SK-N-SH (cell line): ENCODE measurements at regions of chr7 and their contacts with region 1.

Region 1: GRCh38 chr7:6589829-6590644 is at the start of gene INTS15:
- DNase-seq: peak; percentile 99
- H3K4me3 ChIP-seq: peak within 1 kb of the TSS; percentile 63 to 99
- H3K27ac ChIP-seq: peak within 1 kb of the TSS; percentile 62 to 75; a peak in 3 of 4 replicates
- H3K4me1 ChIP-seq: peaks cover 2 to 7% of the 10 kb centered on the region in 2 experiments; a peak in 1 of 4 replicates
- H3K27me3 ChIP-seq: no peaks in the 10 kb centered on the region
- CTCF ChIP-seq: peak; percentile 62
- EP300 ChIP-seq: peak in 1 of 2 experiments; percentile 26; a peak in 1 of 4 replicates
- RAD21 ChIP-seq: peak; percentile 49
- polyA plus RNA-seq, gene INTS15: 31.3 and 39.1 TPM in 2 replicates

Region 2: GRCh38 chr7:6382817-6383216 is 207.2 kb before region 1 on chr7:
- CTCF ChIA-PET with region 1: no interaction called
- POLR2A ChIA-PET with region 1: no interaction called
- DNase-seq: no peak
- H3K4me3 ChIP-seq: no peak overlapping the region
- H3K27ac ChIP-seq: peak overlapping the region in 1 of 2 experiments; percentile 84; a peak in 1 of 4 replicates
- H3K4me1 ChIP-seq: peaks cover 3 to 29% of the 10 kb centered on the region in 2 experiments
- H3K27me3 ChIP-seq: no peaks in the 10 kb centered on the region
- CTCF ChIP-seq: no peak
- EP300 ChIP-seq: no peak
- RAD21 ChIP-seq: no peak

Region 3: DNA sequence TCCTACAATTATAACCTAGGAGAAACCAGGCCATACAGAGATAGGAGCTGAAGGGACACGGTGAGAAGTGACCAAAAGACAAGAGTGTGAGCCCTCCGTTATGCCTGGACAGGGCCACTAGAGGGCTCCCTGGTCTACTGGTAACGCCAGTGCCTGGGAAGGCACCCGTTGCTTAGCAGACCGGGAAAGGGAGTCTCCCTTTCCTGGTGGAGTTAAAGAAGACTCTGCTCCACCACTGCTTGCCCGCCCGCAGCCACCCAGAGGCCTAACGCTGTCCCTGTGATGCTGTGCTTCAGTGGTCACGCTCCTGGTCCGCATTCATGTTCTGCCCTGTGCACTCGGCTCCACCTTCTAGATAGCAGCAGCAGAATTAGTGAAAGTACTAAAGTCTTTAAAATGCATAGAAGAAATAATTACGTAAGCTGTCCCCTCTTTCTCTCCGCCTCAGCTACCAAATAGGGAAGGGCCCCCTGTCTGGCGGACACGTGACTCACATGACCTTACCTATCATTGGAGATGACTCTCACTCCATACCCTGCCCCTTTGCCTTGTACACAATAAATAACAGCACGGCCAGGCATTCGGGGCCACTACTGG is 73.6 kb before region 1 on chr7:
- CTCF ChIA-PET with region 1: interaction called, 19 read pairs
- POLR2A ChIA-PET with region 1: no interaction called
- DNase-seq: peak; percentile 85
- H3K4me3 ChIP-seq: peak overlapping the region in 1 of 2 experiments; percentile 42; a peak in 2 of 4 replicates
- H3K27ac ChIP-seq: no peak overlapping the region
- H3K4me1 ChIP-seq: peaks cover 0 to 3% of the 10 kb centered on the region in 2 experiments; a peak in 1 of 4 replicates
- H3K27me3 ChIP-seq: peaks cover 6% of the 10 kb centered on the region; the same call in 1 of the 2 replicates
- CTCF ChIP-seq: peak; percentile 89
- EP300 ChIP-seq: no peak
- RAD21 ChIP-seq: peak; percentile 87

Region 4: GRCh38 chr7:6558837-6559236 is 31.2 kb before region 1 on chr7:
- CTCF ChIA-PET with region 1: interaction called, 11 read pairs
- POLR2A ChIA-PET with region 1: no interaction called
- DNase-seq: peak; percentile 88
- H3K4me3 ChIP-seq: no peak overlapping the region
- H3K27ac ChIP-seq: no peak overlapping the region
- H3K4me1 ChIP-seq: no peaks in the 10 kb centered on the region
- H3K27me3 ChIP-seq: peaks cover 2% of the 10 kb centered on the region; the same call in 1 of the 2 replicates
- CTCF ChIP-seq: peak; percentile 65
- EP300 ChIP-seq: no peak
- RAD21 ChIP-seq: peak; percentile 89

Region 5: DNA sequence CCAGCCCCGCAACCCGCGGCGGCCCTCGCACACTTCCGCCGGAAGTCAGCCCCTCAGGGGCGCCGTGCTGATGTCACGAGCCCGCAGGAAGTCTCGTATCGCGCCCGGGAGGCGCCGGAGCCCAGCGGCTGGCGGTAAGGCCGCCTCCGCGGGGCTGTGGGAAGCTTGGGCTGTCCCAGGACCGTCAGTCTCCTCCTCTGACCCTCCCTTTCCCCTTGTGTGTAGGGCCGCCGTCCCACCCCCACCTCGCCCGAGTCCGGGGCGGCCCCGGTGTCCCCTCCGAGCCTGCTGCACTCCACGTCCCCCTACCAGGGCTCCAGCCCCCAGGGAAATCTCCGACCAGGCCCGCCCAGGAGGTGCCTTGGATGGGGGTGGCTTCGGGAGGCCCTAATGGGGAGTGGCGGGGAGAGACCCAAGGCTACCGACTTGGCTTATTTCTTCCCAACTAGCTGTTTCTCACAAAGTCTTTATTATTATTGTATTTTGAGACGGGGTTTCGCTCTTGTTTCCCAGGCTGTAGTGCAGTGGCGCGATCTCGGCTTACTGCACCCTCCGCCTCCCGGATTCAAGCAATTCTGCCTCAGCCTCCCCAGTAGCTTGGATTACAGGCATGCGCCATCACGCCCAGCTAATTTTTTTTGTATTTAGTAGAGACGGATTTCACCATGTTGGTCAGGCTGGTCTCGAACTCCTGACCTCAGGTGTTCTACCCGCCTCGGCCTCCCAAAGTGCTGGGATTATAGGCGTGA is 12.5 kb before region 1 on chr7 and contains the start of gene ZDHHC4:
- CTCF ChIA-PET with region 1: interaction called, 65 read pairs
- POLR2A ChIA-PET with region 1: interaction called, 16 read pairs
- DNase-seq: peak; percentile 99
- H3K4me3 ChIP-seq: peak within 1 kb of the TSS; percentile 62 to 87
- H3K27ac ChIP-seq: peak within 1 kb of the TSS; percentile 80 to 89
- H3K4me1 ChIP-seq: peaks cover 0 to 7% of the 10 kb centered on the region in 2 experiments; a peak in 1 of 4 replicates
- H3K27me3 ChIP-seq: no peaks in the 10 kb centered on the region
- CTCF ChIP-seq: no peak
- EP300 ChIP-seq: peak in 1 of 2 experiments; percentile 20; a peak in 1 of 4 replicates
- RAD21 ChIP-seq: no peak
- polyA plus RNA-seq, gene ZDHHC4: 169 and 178 TPM in 2 replicates

Region 6: GRCh38 chr7:6607651-6608051 is 17.6 kb after region 1 on chr7:
- CTCF ChIA-PET with region 1: interaction called, 15 read pairs
- POLR2A ChIA-PET with region 1: no interaction called
- DNase-seq: peak; percentile 43
- H3K4me3 ChIP-seq: no peak overlapping the region
- H3K27ac ChIP-seq: no peak overlapping the region
- H3K4me1 ChIP-seq: no peaks in the 10 kb centered on the region
- H3K27me3 ChIP-seq: no peaks in the 10 kb centered on the region
- CTCF ChIP-seq: no peak
- EP300 ChIP-seq: no peak
- RAD21 ChIP-seq: no peak

Region 7: DNA sequence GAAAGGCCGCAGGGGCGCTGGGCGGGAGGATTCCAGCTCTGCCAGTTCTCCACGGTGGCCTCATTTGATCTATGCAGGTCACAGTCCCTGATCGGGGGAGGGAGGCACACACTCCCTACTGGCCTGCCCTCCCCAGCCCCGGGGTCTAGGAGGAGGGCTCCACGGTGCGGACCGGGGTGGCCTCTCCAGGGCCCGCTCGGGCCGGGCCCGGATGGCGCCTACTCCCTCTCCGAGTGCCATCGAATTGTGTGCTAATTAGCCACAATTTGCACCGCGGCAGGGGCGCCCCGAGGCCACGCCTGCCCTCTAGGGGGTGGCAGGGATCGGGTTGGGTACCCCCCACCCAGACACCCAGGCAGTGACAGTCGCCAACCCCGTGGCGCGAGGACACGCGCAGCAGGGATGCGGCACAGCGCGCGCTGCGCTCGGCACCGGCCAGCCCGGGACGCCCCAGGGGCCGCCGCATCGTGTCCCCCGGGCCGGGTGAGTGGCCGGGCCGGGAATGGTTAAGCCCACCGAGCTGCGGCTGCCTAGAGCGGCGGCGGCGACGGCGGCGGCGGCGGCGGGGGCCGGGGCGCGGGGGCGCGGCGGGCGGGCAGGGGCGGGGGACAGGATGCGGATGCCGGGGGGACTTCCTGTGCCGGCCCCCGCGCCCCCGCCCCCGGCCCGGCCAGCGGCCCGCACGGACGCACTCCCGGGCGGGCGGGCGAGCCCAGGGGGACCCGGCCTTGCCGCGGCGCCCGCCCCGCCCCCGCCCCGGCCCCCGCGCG is 25.1 kb after region 1 on chr7 and contains the start of gene ZNF853:
- CTCF ChIA-PET with region 1: interaction called, 15 read pairs
- POLR2A ChIA-PET with region 1: interaction called, 5 read pairs
- DNase-seq: peak; percentile 93
- H3K4me3 ChIP-seq: peak within 1 kb of the TSS; percentile 59 to 73
- H3K27ac ChIP-seq: peak within 1 kb of the TSS in 1 of 2 experiments; percentile 25; a peak in 1 of 4 replicates
- H3K4me1 ChIP-seq: peaks cover 0 to 13% of the 10 kb centered on the region in 2 experiments; a peak in 2 of 4 replicates
- H3K27me3 ChIP-seq: no peaks in the 10 kb centered on the region
- CTCF ChIP-seq: peak; percentile 26
- EP300 ChIP-seq: no peak
- RAD21 ChIP-seq: no peak
- polyA plus RNA-seq, gene ZNF853: 15.9 and 17.6 TPM in 2 replicates

Region 8: DNA sequence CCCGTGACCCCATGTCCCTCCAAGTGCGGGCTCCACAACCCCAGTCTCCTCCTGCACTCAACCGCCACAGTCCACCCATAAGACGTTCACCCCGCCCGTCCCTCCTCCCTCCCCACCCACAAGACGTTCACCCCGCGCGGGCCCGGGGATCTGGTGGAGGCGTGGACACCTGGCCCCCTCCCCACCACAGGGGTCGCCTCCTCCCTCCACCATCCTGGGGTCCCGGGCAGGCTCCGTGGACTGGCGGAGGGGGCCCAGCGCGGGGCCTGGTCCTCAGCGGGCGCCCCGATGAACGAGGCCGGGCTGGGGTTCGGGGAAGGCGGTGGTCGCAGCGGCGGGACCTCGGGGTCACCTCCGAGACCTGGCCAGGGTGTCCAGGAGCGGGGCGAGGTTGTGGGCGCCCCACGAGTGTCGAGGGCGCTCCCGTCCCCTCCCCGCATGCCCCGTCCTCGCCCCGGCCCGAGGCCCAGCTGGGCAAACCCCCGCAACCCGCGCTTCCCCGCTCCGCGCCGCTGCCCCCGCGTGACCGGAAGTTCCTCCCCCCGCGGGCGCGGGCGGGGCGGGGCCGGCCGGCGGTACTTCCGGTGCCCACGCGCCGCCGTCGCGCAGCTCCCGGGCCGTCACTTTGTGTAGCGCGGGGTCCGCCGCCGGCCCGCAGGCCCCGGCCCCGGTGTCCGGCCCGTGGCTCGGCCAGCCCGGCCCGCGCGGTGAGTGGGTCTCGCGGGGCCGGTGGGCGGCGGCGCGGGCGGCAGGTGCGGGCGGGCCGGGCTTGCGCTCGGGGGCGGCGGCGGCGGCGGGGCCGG is 46.9 kb after region 1 on chr7 and contains the start of gene ZNF316:
- CTCF ChIA-PET with region 1: interaction called, 11 read pairs
- POLR2A ChIA-PET with region 1: interaction called, 4 read pairs
- DNase-seq: peak; percentile 99
- H3K4me3 ChIP-seq: peak within 1 kb of the TSS; percentile 68 to 93
- H3K27ac ChIP-seq: peak within 1 kb of the TSS in 1 of 2 experiments; percentile 67; a peak in 2 of 4 replicates
- H3K4me1 ChIP-seq: peaks cover 5 to 15% of the 10 kb centered on the region in 2 experiments; a peak in 2 of 4 replicates
- H3K27me3 ChIP-seq: no peaks in the 10 kb centered on the region
- CTCF ChIP-seq: no peak
- EP300 ChIP-seq: no peak
- RAD21 ChIP-seq: no peak
- polyA plus RNA-seq, gene ZNF316: 18.0 and 18.6 TPM in 2 replicates

Region 9: DNA sequence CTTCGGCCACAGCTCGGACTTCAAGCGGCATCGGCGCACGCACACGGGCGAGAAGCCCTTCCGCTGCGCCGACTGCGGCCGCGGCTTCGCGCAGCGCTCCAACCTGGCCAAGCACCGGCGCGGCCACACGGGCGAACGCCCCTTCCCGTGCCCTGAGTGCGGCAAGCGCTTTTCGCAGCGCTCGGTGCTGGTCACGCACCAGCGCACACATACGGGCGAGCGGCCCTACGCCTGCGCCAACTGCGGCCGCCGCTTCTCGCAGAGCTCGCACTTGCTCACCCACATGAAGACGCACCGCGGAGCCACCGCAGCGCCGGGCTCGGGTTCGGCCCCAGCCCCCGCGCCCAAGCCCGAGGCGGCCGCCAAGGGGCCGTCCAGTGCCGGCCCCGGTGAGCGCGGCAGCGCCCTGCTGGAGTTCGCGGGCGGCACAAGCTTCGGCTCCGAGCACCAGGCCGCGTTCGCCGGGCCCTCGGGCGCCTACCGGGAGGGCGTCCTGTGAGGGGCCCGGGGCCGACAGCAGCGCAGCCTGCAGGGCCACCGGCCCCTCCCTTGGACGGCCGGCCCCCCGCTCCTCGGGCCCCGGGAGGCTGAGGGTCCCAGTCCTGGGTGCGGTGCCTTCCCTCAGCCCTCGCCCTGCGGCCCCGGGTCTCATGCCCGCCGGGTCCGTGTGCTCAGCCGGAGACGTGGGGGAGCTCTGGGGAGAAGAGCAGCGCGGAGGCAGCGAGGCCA is 64.2 kb after region 1 on chr7:
- CTCF ChIA-PET with region 1: no interaction called
- POLR2A ChIA-PET with region 1: no interaction called
- DNase-seq: no peak
- H3K4me3 ChIP-seq: no peak overlapping the region; a peak in 1 of 4 replicates
- H3K27ac ChIP-seq: no peak overlapping the region
- H3K4me1 ChIP-seq: peaks cover 0 to 7% of the 10 kb centered on the region in 2 experiments; a peak in 1 of 4 replicates
- H3K27me3 ChIP-seq: no peaks in the 10 kb centered on the region
- CTCF ChIP-seq: no peak
- EP300 ChIP-seq: no peak
- RAD21 ChIP-seq: no peak